Motor neuron (in vitro differentiated cells): ENCODE measurements at regions of chr13 and their contacts with region 1.

Region 1: DNA sequence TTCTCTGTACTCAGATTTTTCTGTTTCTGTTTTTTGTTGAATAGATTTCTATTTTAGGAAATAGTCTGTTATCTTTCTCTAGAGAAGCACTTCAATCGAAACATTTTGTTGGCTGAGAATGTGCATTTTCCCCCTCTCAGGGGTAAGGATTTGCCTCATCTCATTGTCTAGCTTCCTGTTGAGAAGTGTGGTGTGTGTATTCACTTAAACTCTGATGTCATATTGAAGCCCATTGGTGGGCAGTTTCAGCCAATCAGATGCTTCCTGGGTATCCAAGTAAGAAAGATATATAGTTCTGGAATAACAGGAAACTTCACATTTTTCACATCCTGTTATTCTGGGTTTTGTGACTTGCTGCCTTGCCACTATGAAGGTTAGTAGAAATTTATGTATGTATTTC is 87.6 kb downstream of the ARHGEF7 start:
- ATAC-seq: peak in 7 of 8 experiments; percentile 40 to 77 (median 58)
- H3K4me3 ChIP-seq: no peak overlapping the region
- H3K27ac ChIP-seq: no peak overlapping the region
- H3K4me1 ChIP-seq: peaks cover 22 to 25% of the 10 kb centered on the region in 2 donors

Region 2: DNA sequence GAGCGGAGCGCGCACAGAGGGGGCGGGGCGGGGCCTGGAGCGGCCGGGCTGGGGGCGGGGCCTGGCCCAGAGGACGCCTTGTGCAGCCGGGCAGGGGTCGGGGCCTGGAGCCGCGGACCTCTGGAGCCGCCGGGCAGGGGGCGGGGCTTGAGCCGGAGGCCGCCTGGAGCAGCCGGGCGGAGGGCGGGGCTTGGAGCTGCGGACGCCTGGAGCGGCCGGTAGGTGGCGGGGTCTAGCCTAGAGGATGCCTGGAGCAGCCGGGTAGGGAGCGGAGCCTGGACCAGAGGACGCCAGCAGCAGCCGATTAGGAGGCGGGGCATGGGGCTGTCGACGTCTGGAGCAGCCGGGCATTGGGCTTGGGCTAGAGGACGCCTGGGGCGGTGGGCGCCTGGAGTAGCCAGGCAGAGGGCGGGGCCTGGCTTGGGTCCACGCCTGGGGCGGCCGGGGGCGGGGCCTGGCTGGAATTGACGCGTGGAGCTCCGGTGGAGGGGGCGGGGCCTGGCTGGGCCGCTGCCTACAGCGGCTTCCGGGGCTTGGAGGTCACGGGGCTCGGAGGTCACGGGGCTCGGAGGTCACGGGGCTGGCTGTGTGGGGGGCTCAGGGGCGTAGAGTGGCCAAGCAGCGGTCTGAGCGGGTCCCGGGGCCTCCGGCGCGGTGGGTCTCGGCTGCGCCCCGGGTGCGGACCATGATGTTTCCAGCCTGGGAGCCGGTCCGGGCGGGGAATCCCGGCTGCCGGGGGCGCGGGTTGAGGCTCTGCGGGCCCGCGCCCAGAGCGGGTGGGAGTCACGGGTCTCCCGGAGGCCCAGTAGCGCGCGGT is 287.5 kb before region 1 on chr13 and contains the start of gene ANKRD10:
- in situ Hi-C with region 1: loop called in 1 of 9 experiments (anchors 25 kb)
- ATAC-seq: peak; percentile 77 to 94 (median 93)
- H3K4me3 ChIP-seq: peak within 1 kb of the TSS; percentile 75 to 90 (median 85)
- H3K27ac ChIP-seq: peak within 1 kb of the TSS; percentile 96 to 97
- H3K4me1 ChIP-seq: peaks cover 21 to 23% of the 10 kb centered on the region in 2 donors
- total RNA-seq, gene ANKRD10: 75.5 to 247 (median 108) TPM

Region 3: DNA sequence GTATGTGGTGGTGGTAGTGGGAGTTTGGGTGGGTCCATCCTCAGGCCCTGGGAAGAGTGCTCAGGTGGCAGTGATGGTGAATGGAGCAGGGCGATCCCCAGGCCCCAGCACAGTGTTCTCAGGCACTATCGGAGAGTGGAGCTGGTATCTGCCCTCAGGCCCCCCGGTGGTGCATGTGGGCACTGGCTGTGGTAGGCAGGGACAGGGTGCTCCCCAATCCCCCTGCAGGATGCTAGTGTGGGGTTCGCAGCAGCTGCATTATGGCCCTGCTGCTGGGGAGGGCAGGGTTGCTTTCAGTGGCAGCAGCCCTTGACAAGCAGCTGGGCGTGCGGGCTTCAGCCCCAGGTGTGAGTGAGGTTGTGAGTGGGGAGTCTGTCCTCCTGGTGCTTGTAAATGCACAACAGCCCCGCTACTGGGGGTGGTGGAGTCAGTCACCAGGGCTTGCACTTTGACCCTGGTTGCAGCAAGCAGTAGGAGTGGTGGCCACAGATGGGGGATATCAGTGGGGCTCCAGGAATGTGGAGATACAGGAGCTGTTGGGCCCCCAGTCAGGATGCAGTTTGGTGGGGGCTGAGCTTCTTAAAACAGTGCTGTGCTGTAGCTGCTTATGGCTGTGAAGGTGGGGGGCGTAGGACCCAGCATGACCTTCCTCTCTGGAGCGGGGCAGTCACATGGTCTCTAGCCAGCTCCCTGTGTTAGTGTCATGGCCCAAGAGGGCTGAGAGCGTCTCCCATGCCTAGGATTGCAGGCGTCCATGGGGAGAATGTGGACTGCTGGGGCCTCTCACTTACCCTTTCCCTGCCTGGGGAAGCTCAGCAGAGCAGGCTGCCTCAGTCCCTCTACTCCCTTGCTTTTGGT is 126.4 kb before region 1 on chr13:
- in situ Hi-C with region 1: loop called in 1 of 9 experiments (anchors 25 kb)
- ATAC-seq: no peak
- H3K4me3 ChIP-seq: no peak overlapping the region
- H3K27ac ChIP-seq: no peak overlapping the region
- H3K4me1 ChIP-seq: no peaks in the 10 kb centered on the region